Mammary epithelial cell (primary cell): ENCODE measurements at regions of chr22 and their contacts with region 1.

Region 1: GRCh38 chr22:41857155-41857859 is 24.4 kb downstream of the SREBF2 start:
- DNase-seq: peak; percentile 88
- H3K4me3 ChIP-seq: no peak overlapping the region
- H3K27ac ChIP-seq: peak overlapping the region; percentile 41
- H3K4me1 ChIP-seq: peaks cover 59% of the 10 kb centered on the region
- H3K27me3 ChIP-seq: no peaks in the 10 kb centered on the region
- CTCF ChIP-seq: peak; percentile 66

Region 2: GRCh38 chr22:41800348-41801146 is 56.8 kb before region 1 on chr22 and contains the start of gene CCDC134:
- CTCF ChIA-PET with region 1: no interaction called
- dilution Hi-C with region 1: no loop called
- in situ Hi-C with region 1: no loop called
- intact Hi-C with region 1: loop called (anchors 2 kb)
- DNase-seq: peak; percentile 75
- H3K4me3 ChIP-seq: peak within 1 kb of the TSS; percentile 89 to 100 (median 93)
- H3K27ac ChIP-seq: peak within 1 kb of the TSS; percentile 69
- H3K4me1 ChIP-seq: peaks cover 21% of the 10 kb centered on the region
- H3K27me3 ChIP-seq: no peaks in the 10 kb centered on the region
- CTCF ChIP-seq: no peak
- total RNA-seq, gene CCDC134: 9.4 to 10.5 TPM

Region 3: GRCh38 chr22:41832553-41833368 is 24.5 kb before region 1 on chr22 and contains the start of gene SREBF2:
- CTCF ChIA-PET with region 1: no interaction called
- dilution Hi-C with region 1: no loop called
- in situ Hi-C with region 1: no loop called
- intact Hi-C with region 1: loop called (anchors 1 kb)
- DNase-seq: peak; percentile 100
- H3K4me3 ChIP-seq: peak within 1 kb of the TSS; percentile 66 to 92 (median 75)
- H3K27ac ChIP-seq: peak within 1 kb of the TSS; percentile 82
- H3K4me1 ChIP-seq: peaks cover 30% of the 10 kb centered on the region
- H3K27me3 ChIP-seq: no peaks in the 10 kb centered on the region
- CTCF ChIP-seq: no peak
- total RNA-seq, gene SREBF2: 100 to 131 TPM

Region 4: DNA sequence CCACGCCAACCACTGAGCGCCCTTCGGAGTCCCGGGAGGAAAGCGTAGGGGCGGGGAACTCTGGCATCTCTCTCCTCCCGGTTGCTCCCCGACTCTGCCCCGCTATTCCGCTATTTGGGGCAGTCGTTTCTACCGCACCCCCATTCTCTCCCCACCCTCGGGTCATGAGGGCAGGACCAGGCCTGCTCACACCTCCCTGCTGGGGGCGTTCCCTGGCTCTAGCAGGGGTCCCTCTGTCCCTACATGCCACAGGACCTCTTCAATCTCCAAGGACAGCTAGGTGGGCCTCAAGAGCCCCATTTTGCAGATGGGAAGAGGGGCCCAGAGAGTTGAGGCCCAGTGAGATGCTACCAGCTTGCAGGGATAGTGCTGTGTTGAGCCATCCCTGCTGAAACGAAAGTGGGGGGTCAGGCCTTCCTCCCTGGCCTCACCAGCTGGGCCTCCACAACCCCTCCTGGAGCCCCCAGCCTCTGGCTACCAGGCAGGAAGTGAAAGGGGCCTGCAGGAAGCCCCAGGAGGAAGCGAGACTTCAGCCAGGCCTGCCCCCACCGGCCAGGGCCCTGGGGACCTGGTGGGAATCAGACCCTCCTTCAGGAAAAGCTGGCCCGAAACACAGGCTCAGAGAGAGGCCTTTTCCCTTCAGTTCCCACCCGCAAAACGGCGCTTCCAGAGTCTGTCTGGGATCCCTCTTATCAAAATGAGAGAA is 63.1 kb after region 1 on chr22:
- CTCF ChIA-PET with region 1: no interaction called
- dilution Hi-C with region 1: no loop called
- in situ Hi-C with region 1: no loop called
- intact Hi-C with region 1: no loop called
- DNase-seq: no peak
- H3K4me3 ChIP-seq: no peak overlapping the region
- H3K27ac ChIP-seq: no peak overlapping the region
- H3K4me1 ChIP-seq: peaks cover 14% of the 10 kb centered on the region
- H3K27me3 ChIP-seq: peaks cover 4% of the 10 kb centered on the region
- CTCF ChIP-seq: no peak

Region 5: DNA sequence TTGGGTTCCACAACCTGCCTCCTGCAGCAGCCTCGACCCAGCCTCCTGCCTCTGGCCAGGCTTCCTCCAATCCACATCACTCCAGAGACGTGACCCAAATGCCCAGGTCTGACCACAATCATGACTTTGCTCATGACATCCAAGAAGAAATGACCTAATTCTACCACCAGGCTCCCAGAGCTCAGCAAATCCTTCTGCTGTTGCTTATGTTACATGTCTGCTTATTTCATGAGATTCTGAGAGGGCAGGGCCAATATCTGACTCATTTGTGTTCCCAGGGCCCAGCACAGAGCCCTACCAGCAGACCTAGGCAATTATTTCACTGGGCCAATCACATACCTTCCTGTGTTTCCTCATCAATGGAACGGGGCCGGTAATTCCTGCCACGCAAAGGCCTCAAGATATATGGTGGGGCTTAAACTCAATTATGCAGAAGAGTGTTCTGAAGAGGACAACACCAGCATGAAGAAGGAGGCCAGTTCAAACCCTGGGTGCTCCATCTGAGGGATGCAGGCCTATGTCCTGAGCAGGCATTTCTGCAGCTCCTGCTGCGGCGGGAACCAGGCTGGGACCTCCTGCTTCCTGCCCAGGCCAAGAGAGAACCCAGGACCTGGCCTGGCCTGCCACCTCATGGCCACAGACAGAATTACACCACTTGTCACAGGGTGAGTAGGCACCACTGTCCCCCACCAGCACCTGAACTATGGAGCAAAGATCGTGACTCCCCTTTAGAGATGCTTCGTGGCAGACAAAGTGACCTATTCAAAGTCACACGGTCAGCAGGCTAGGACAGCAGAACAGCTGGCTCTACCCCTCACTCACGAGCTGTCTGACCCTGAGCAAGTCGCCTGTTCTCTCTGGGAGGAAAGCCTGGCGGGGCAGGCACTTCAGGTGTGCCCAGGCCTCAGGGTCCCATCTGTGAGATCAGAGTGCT is 83.8 kb after region 1 on chr22:
- CTCF ChIA-PET with region 1: interaction called, 5 read pairs
- dilution Hi-C with region 1: no loop called
- in situ Hi-C with region 1: no loop called
- intact Hi-C with region 1: loop called (anchors 1 kb)
- DNase-seq: peak; percentile 71
- H3K4me3 ChIP-seq: no peak overlapping the region
- H3K27ac ChIP-seq: peak overlapping the region; percentile 18
- H3K4me1 ChIP-seq: peaks cover 10% of the 10 kb centered on the region
- H3K27me3 ChIP-seq: no peaks in the 10 kb centered on the region
- CTCF ChIP-seq: peak; percentile 86 to 88